Calu3 (cell line): ENCODE measurements at regions of chr12 and their contacts with region 1.

Region 1: GRCh38 chr12:95336390-95337067 is 118.9 kb downstream of the VEZT start:
- DNase-seq: peak; percentile 85
- H3K4me3 Mint-ChIP-seq: peak overlapping the region; percentile 11
- H3K27ac Mint-ChIP-seq: peak overlapping the region; percentile 42
- H3K4me1 Mint-ChIP-seq: peaks cover 34% of the 10 kb centered on the region
- H3K27me3 Mint-ChIP-seq: no peaks in the 10 kb centered on the region
- CTCF ChIP-seq: peak; percentile 84

Region 2: GRCh38 chr12:94603434-94604365 is 732.8 kb before region 1 on chr12:
- CTCF ChIA-PET with region 1: no interaction called
- intact Hi-C with region 1: loop called (anchors 5 kb)
- DNase-seq: peak; percentile 83
- H3K4me3 Mint-ChIP-seq: no peak overlapping the region
- H3K27ac Mint-ChIP-seq: no peak overlapping the region
- H3K4me1 Mint-ChIP-seq: no peaks in the 10 kb centered on the region
- H3K27me3 Mint-ChIP-seq: peaks cover 10% of the 10 kb centered on the region
- CTCF ChIP-seq: peak; percentile 89

Region 3: GRCh38 chr12:95117178-95117599 is 219.3 kb before region 1 on chr12:
- CTCF ChIA-PET with region 1: interaction called, 16 read pairs
- intact Hi-C with region 1: loop called (anchors 1 kb)
- DNase-seq: peak; percentile 78
- H3K4me3 Mint-ChIP-seq: peak overlapping the region; percentile 78
- H3K27ac Mint-ChIP-seq: peak overlapping the region; percentile 99
- H3K4me1 Mint-ChIP-seq: peaks cover 47% of the 10 kb centered on the region
- H3K27me3 Mint-ChIP-seq: no peaks in the 10 kb centered on the region
- CTCF ChIP-seq: peak; percentile 76

Region 4: GRCh38 chr12:95473884-95474659 is 137.5 kb after region 1 on chr12 and contains the start of gene METAP2:
- CTCF ChIA-PET with region 1: interaction called, 4 read pairs
- intact Hi-C with region 1: loop called (anchors 5 kb)
- DNase-seq: peak; percentile 98
- H3K4me3 Mint-ChIP-seq: peak within 1 kb of the TSS; percentile 89
- H3K27ac Mint-ChIP-seq: peak within 1 kb of the TSS; percentile 97
- H3K4me1 Mint-ChIP-seq: peaks cover 28% of the 10 kb centered on the region
- H3K27me3 Mint-ChIP-seq: no peaks in the 10 kb centered on the region
- CTCF ChIP-seq: no peak
- total RNA-seq, gene METAP2: 96.0 and 96.3 TPM in 2 replicates